ENCODE measurements at regions of chr12 and their contacts with region 1.

Region 1: GRCh38 chr12:51293696-51294095 is 23.5 kb upstream of the SMAGP start:
- H3K4me3 Mint-ChIP-seq: no peak overlapping the region
- H3K27ac Mint-ChIP-seq: no peak overlapping the region
- H3K4me1 Mint-ChIP-seq: peaks cover 9% of the 10 kb centered on the region
- H3K27me3 Mint-ChIP-seq: no peaks in the 10 kb centered on the region

Region 2: DNA sequence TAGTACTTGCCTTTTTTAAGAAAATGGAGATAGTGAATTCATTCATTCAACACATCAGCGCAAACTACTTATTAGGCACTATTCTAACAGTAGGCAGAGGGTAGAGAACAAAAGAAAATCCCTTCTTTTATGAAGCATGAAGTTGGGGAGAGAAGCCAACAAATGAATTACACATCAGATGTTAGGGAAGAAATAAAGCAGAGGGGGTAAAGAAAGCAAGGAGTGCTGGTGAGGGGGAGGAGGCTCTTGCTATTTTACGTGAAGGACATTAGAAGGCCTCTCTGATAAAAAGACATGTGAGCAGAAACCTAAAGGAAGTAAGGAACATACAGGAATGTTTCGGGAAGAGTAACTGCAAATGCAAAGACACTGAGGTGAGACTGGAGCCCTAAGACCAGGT is 142.9 kb before region 1 on chr12:
- intact Hi-C with region 1: no loop called
- H3K4me3 Mint-ChIP-seq: no peak overlapping the region
- H3K27ac Mint-ChIP-seq: no peak overlapping the region
- H3K4me1 Mint-ChIP-seq: peaks cover 10% of the 10 kb centered on the region
- H3K27me3 Mint-ChIP-seq: no peaks in the 10 kb centered on the region

Region 3: DNA sequence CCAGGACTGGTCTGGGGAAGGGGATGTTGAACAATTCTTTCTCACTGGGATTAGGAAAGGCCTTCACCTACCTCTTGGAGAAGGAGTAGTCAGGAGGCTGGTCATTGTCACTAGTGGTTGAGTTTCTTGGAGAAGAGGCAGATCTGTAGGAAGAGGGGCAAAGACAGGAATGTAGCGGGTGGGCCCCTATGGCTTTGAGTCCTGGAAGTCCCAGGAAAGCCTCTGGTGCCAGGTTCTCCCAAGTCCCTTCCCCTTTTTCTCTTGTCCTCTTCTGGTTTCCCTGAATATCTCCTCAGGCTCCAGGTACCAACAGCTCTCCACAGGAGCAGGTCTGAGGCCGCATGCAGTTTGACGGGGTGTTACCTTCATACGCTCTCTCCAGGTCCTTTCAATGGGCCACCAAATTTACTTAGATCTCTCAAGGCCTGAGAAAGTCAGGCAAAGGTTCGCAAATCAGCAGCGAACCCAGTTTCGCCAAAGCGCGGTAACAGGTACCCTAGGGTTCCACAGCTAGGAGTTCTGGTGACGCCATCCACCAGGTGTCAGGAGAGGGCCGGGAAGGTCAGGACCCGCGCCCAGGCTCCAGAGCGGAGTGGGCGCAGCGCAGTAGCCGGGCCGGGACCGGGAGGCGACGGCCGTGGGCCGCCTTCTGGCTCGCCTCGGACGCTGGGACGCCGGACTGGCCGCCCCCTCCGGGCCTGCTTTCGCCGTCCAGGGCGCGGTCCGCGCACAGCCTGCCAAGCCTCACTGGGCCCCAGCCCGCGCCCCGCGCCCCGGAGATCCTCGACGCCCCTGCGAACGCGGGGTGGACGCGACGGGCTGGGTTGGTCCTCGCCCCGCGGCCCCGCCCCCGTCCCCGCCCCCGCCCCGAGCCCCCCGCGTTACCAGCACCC is 24.3 kb before region 1 on chr12:
- intact Hi-C with region 1: loop called (anchors 2 kb)
- H3K4me3 Mint-ChIP-seq: peak overlapping the region; percentile 60
- H3K27ac Mint-ChIP-seq: peak overlapping the region; percentile 43
- H3K4me1 Mint-ChIP-seq: peaks cover 20% of the 10 kb centered on the region
- H3K27me3 Mint-ChIP-seq: peaks cover 45% of the 10 kb centered on the region

Region 4: GRCh38 chr12:51326762-51327439 is 33.2 kb after region 1 on chr12:
- intact Hi-C with region 1: loop called (anchors 5 kb)
- H3K4me3 Mint-ChIP-seq: peak overlapping the region; percentile 57
- H3K27ac Mint-ChIP-seq: peak overlapping the region; percentile 93
- H3K4me1 Mint-ChIP-seq: peaks cover 73% of the 10 kb centered on the region
- H3K27me3 Mint-ChIP-seq: no peaks in the 10 kb centered on the region

Region 5: GRCh38 chr12:52551216-52551865 is 1257.6 kb after region 1 on chr12:
- intact Hi-C with region 1: no loop called
- H3K4me3 Mint-ChIP-seq: no peak overlapping the region
- H3K27ac Mint-ChIP-seq: no peak overlapping the region
- H3K4me1 Mint-ChIP-seq: no peaks in the 10 kb centered on the region
- H3K27me3 Mint-ChIP-seq: peaks cover 17% of the 10 kb centered on the region

Measured in dendritic cell treated with granulocyte-macrophage colony-stimulating factor and Interleukin-4, amounts not matched to agents 40 ng/mL and 50 ng/mL, for 4 days (primary cell).